Pancreas (tissue), 10 donors: ENCODE measurements at regions of chr16 and their contacts with region 1.

Region 1: GRCh38 chr16:9159839-9160550 is 68.6 kb downstream of the HAPSTR1 start:
- DNase-seq: peak; percentile 44 to 91 (median 61)
- ATAC-seq: peak; percentile 71 to 98 (median 96)
- H3K4me3 ChIP-seq: no peak overlapping the region
- H3K27ac ChIP-seq: no peak overlapping the region
- H3K4me1 ChIP-seq: no peaks in the 10 kb centered on the region
- H3K27me3 ChIP-seq: no peaks in the 10 kb centered on the region
- CTCF ChIP-seq: peak; percentile 16 to 74 (median 56)

Region 2: GRCh38 chr16:9016824-9017223 is 143.2 kb before region 1 on chr16:
- intact Hi-C with region 1: no loop called
- DNase-seq: no peak
- ATAC-seq: no peak
- H3K4me3 ChIP-seq: no peak overlapping the region
- H3K27ac ChIP-seq: no peak overlapping the region
- H3K4me1 ChIP-seq: no peaks in the 10 kb centered on the region
- H3K27me3 ChIP-seq: no peaks in the 10 kb centered on the region
- CTCF ChIP-seq: no peak

Region 3: GRCh38 chr16:10181196-10182162 is 1021.5 kb after region 1 on chr16:
- intact Hi-C with region 1: loop called in 1 of 3 experiments (anchors 5 kb)
- DNase-seq: peak; percentile 50 to 91 (median 70)
- ATAC-seq: peak; percentile 95 to 97 (median 96)
- H3K4me3 ChIP-seq: peak overlapping the region in 2 of 4 donors; percentile 10 to 38
- H3K27ac ChIP-seq: no peak overlapping the region
- H3K4me1 ChIP-seq: no peaks in the 10 kb centered on the region
- H3K27me3 ChIP-seq: peaks cover 0 to 25% (median 2%) of the 10 kb centered on the region in 4 donors
- CTCF ChIP-seq: peak; percentile 89 to 91 (median 90)

Region 4: DNA sequence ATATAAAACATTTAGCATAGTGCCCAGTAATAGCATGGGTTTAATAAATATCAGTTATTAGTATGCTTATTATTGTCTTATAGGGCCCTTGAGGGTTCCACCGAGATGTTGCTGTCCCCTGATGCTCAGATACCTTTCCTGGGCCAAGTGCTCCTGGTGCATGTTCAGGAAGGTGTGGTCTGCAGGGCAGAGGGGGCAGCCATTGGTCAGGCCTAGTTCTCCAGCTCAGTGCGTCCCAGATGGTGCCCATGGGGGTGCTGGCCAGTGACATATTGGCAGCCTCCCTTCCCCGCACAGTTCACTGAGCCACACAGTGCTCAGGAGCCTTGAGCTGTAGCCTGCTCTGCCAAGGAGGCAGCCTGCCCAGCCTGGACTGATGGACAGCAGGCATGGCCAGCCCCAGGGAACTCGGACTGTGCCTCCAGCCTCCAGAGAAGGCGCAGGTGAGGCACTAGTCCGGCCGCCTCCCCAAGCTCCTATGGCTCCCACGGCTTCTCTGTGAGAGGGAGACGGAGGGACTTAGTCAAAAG is 1029.9 kb after region 1 on chr16:
- intact Hi-C with region 1: loop called in 1 of 3 experiments (anchors 10 kb)
- DNase-seq: peak in 1 of 6 donors; percentile 48
- ATAC-seq: no peak
- H3K4me3 ChIP-seq: no peak overlapping the region
- H3K27ac ChIP-seq: no peak overlapping the region
- H3K4me1 ChIP-seq: no peaks in the 10 kb centered on the region
- H3K27me3 ChIP-seq: no peaks in the 10 kb centered on the region
- CTCF ChIP-seq: no peak